Activated naive CD4-positive, alpha-beta T cell treated with anti-CD3 and anti-CD28 coated beads for 36 hours (primary cell): ENCODE measurements at regions of chr2 and their contacts with region 1.

Region 1: DNA sequence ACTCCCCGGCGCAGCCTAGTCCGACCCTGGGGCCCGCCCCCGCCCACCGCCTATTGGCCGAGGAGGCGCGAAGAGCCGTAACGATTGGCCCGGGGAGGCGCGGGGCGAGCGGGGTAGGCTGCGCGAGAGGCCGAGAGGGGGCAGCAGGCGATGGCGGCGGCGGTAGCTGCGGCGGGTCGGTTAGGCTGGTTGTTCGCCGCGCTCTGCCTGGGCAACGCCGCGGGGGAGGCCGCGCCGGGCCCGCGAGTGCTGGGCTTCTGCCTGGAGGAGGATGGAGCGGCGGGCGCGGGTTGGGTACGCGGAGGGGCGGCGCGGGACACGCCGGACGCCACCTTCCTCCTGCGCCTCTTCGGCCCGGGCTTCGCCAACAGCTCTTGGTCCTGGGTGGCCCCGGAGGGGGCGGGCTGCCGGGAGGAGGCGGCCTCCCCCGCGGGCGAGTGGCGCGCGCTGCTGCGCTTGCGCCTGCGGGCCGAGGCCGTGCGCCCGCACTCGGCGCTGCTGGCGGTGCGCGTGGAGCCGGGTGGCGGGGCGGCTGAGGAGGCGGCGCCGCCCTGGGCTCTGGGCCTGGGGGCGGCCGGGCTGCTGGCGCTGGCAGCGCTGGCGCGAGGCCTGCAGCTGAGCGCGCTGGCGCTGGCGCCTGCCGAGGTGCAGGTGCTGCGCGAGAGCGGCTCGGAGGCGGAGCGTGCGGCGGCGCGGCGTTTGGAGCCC is at the start of gene CNNM3:
- DNase-seq: peak; percentile 97
- H3K4me3 Mint-ChIP-seq: peak within 1 kb of the TSS; percentile 77
- H3K27ac Mint-ChIP-seq: peak within 1 kb of the TSS; percentile 40
- H3K4me1 Mint-ChIP-seq: peaks cover 54% of the 10 kb centered on the region
- H3K27me3 Mint-ChIP-seq: no peaks in the 10 kb centered on the region
- total RNA-seq, gene CNNM3: 17.3 to 19.9 TPM

Region 2: DNA sequence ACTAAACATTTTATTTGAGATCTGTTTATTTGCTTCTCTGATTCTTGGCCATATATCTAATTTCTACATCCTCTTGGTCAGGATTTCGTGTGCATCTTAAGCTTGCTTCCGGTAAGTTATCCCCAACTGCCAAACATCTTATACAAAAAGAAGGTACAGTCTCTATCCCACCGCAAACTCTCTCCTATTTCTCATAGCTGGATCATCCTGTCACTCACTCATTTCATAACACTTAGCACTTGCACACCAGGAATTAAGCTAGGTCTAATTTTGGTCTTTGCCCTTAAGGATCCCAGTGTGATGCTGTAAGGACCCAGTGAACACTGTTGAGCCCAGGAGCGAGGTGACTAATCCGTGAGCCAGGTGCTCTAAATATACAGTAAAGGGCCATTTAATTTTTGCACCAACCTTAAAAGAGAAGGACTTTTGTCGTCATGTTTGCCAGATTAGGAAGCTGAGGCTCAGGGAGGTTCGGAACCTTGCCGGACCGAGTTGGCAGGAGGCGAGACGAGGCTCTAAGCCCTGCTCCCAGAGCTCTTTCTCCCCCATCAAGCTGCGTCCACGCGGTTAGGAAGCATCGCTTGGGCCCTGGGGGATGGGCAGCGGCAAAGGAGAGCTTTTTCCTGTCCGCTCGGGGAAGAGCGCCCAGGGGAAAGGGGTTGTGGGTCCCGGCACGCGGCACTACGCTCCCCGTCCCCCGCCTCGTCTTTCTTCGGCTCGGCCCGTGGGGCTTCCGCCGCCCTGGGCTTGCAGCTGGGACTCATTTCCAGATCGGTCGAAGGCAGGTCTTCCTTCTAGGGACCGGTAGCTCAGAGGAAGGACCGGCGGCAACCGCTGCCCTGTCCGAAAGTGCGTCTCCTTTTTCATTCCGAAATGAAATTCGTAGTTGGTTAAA is 495.3 kb before region 1 on chr2:
- CTCF ChIA-PET with region 1: no interaction called
- intact Hi-C with region 1: loop called (anchors 5 kb)
- DNase-seq: peak; percentile 36
- H3K4me3 Mint-ChIP-seq: peak overlapping the region; percentile 88
- H3K27ac Mint-ChIP-seq: peak overlapping the region; percentile 39
- H3K4me1 Mint-ChIP-seq: peaks cover 41% of the 10 kb centered on the region
- H3K27me3 Mint-ChIP-seq: peaks cover 2% of the 10 kb centered on the region

Region 3: GRCh38 chr2:96739633-96740428 is 76.5 kb before region 1 on chr2 and contains the start of gene LMAN2L:
- CTCF ChIA-PET with region 1: no interaction called
- intact Hi-C with region 1: loop called (anchors 1 kb)
- DNase-seq: peak; percentile 99
- H3K4me3 Mint-ChIP-seq: peak within 1 kb of the TSS; percentile 97
- H3K27ac Mint-ChIP-seq: peak within 1 kb of the TSS; percentile 77
- H3K4me1 Mint-ChIP-seq: peaks cover 33% of the 10 kb centered on the region
- H3K27me3 Mint-ChIP-seq: no peaks in the 10 kb centered on the region
- total RNA-seq, gene LMAN2L: 4.0 to 4.8 TPM

Region 4: DNA sequence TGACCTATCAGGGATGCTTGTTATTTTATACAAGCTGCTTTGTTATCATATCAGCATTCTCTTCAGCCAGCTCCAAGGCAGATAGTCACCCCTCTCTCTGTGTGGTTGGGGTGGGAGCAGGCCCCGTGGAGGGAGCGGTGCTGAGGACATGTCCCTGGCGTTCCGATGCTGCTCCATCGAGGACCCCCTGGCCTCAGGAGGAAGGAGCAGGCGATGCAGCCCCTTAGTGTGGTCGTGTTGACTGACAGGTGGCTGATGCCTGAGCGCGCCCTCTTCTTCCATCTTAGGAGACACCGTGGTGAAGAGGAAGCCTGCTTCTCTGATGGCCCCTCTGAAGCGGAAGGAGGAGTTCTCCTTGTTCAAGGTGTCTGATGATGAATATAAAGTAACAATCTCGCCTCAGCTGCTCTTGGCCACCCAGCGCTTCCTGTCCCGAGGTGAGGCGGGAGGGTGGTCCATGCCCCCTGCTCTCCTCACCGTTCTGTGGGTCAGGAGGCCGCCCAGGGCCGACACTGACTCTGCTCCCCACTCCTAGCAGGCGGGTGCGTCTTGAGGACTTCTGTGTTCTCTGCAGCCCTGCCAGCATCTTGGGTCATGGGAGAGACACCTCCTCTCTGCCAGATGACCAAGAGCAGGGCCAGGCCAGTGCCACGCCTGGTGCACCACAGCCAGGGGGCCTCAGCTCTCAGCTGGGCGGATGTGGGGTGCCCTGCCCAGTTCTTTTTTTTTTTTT is 10.4 kb after region 1 on chr2:
- CTCF ChIA-PET with region 1: no interaction called
- intact Hi-C with region 1: no loop called
- DNase-seq: no peak
- H3K4me3 Mint-ChIP-seq: no peak overlapping the region
- H3K27ac Mint-ChIP-seq: no peak overlapping the region
- H3K4me1 Mint-ChIP-seq: peaks cover 6% of the 10 kb centered on the region
- H3K27me3 Mint-ChIP-seq: no peaks in the 10 kb centered on the region

Region 5: DNA sequence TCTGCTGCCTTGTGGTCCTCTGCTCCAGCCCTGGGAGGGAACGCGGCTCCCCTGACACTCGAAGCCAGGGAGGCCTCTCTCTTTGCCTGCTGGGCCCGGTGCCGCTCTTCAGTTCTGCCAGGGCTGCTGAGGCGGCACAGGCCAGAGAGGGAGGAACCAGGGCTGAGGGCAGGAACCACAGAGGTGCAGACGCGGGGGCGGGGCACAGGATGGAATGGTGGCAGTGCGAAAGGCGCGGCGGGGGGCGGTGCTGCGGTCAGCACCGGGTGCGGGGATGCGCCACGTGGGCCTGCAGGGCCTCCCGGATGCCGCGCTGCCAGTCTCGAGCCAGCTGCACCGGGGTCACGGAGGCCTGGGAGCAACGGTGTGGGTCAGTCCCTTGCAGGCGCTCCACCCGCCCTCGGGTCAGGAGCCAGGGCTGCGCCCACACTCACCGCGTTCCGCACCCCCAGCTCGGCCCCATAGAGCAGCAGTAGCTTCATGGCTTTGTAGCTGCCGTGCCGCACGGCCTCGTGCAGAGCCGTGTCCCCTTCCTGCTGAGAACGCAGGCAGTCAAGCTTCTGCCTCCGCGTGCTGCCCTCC is 23.1 kb after region 1 on chr2:
- CTCF ChIA-PET with region 1: interaction called, 3 read pairs
- intact Hi-C with region 1: loop called (anchors 2 kb)
- DNase-seq: peak; percentile 89
- H3K4me3 Mint-ChIP-seq: peak overlapping the region; percentile 49
- H3K27ac Mint-ChIP-seq: no peak overlapping the region
- H3K4me1 Mint-ChIP-seq: peaks cover 11% of the 10 kb centered on the region
- H3K27me3 Mint-ChIP-seq: no peaks in the 10 kb centered on the region

Region 6: GRCh38 chr2:96960153-96960961 is 144.1 kb after region 1 on chr2:
- CTCF ChIA-PET with region 1: interaction called, 4 read pairs
- intact Hi-C with region 1: loop called (anchors 5 kb)
- DNase-seq: peak; percentile 92
- H3K4me3 Mint-ChIP-seq: no peak overlapping the region
- H3K27ac Mint-ChIP-seq: no peak overlapping the region
- H3K4me1 Mint-ChIP-seq: peaks cover 49% of the 10 kb centered on the region
- H3K27me3 Mint-ChIP-seq: no peaks in the 10 kb centered on the region